ENCODE measurements at regions of chr6 and their contacts with region 1.

Region 1: GRCh38 chr6:30787954-30788353 is 43.6 kb upstream of the IER3 start:
- DNase-seq: peak; percentile 89
- ATAC-seq: peak; percentile 73
- H3K4me3 Mint-ChIP-seq: peak overlapping the region; percentile 77
- H3K27ac Mint-ChIP-seq: peak overlapping the region; percentile 94
- H3K4me1 Mint-ChIP-seq: peaks cover 70% of the 10 kb centered on the region
- H3K27me3 Mint-ChIP-seq: no peaks in the 10 kb centered on the region
- CTCF ChIP-seq: no peak

Region 2: GRCh38 chr6:30556066-30556905 is 231.7 kb before region 1 on chr6 and contains the start of gene GNL1:
- CTCF ChIA-PET with region 1: no interaction called
- POLR2A ChIA-PET with region 1: no interaction called
- intact Hi-C with region 1: no loop called
- DNase-seq: peak; percentile 100
- ATAC-seq: peak; percentile 93
- H3K4me3 Mint-ChIP-seq: peak within 1 kb of the TSS; percentile 91
- H3K27ac Mint-ChIP-seq: peak within 1 kb of the TSS; percentile 99
- H3K4me1 Mint-ChIP-seq: peaks cover 35% of the 10 kb centered on the region
- H3K27me3 Mint-ChIP-seq: no peaks in the 10 kb centered on the region
- CTCF ChIP-seq: no peak
- total RNA-seq, gene GNL1: 107 to 122 TPM

Region 3: GRCh38 chr6:30742316-30743098 is 45.4 kb before region 1 on chr6 and contains the start of gene FLOT1:
- CTCF ChIA-PET with region 1: interaction called, 5 read pairs
- POLR2A ChIA-PET with region 1: interaction called, 42 read pairs
- intact Hi-C with region 1: loop called (anchors 5 kb)
- DNase-seq: peak; percentile 99
- ATAC-seq: peak; percentile 77
- H3K4me3 Mint-ChIP-seq: peak within 1 kb of the TSS; percentile 99
- H3K27ac Mint-ChIP-seq: peak within 1 kb of the TSS; percentile 94
- H3K4me1 Mint-ChIP-seq: peaks cover 67% of the 10 kb centered on the region
- H3K27me3 Mint-ChIP-seq: no peaks in the 10 kb centered on the region
- CTCF ChIP-seq: no peak
- total RNA-seq, gene FLOT1: 135 TPM

Region 4: GRCh38 chr6:30769088-30769852 is 18.7 kb before region 1 on chr6:
- CTCF ChIA-PET with region 1: interaction called, 6 read pairs
- POLR2A ChIA-PET with region 1: interaction called, 162 read pairs
- intact Hi-C with region 1: loop called (anchors 1 kb)
- DNase-seq: peak; percentile 97
- ATAC-seq: peak; percentile 70
- H3K4me3 Mint-ChIP-seq: peak overlapping the region; percentile 75
- H3K27ac Mint-ChIP-seq: peak overlapping the region; percentile 99
- H3K4me1 Mint-ChIP-seq: peaks cover 82% of the 10 kb centered on the region
- H3K27me3 Mint-ChIP-seq: no peaks in the 10 kb centered on the region
- CTCF ChIP-seq: no peak

Region 5: DNA sequence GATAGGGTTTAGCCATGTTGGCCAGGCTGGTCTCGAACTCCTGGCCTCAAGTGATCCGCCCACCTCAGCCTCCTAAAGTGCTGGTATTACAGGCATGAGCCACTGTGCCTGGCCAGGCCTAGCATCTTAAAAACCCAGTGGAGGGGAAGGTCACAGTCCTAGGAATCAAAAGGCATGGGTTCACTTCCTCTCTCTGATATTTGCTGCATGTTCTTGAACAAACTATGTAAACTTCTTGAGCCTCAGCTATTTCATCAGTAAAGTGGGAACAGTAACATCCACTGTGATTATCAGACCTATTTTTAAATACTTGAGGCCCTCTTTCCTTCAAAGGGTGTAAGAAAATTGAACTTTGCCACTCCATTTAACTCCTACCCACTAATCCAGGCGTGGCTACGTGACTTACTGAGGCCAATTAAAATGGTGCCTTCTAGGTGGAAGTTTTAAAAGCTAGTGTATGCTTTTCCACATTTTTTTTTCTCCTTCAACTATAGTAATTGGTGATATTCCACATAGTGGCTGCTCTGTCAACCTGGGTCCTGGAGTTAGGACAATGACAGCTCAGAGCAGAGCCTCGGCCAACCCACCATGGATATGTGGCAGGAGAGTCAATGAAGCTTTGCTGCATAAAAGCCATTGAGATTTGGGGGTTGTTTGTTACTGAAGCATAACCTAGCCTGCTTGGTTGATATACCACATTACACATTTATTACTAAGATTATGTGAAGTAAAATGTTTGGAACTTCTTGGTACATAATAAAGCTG is 11.4 kb before region 1 on chr6:
- CTCF ChIA-PET with region 1: interaction called, 3 read pairs
- POLR2A ChIA-PET with region 1: interaction called, 162 read pairs
- intact Hi-C with region 1: no loop called
- DNase-seq: no peak
- ATAC-seq: no peak
- H3K4me3 Mint-ChIP-seq: no peak overlapping the region
- H3K27ac Mint-ChIP-seq: peak overlapping the region; percentile 49
- H3K4me1 Mint-ChIP-seq: peaks cover 67% of the 10 kb centered on the region
- H3K27me3 Mint-ChIP-seq: no peaks in the 10 kb centered on the region
- CTCF ChIP-seq: no peak

Region 6: GRCh38 chr6:30799210-30799609 is 11.3 kb after region 1 on chr6:
- CTCF ChIA-PET with region 1: no interaction called
- POLR2A ChIA-PET with region 1: interaction called, 11 read pairs
- intact Hi-C with region 1: no loop called
- DNase-seq: no peak
- ATAC-seq: no peak
- H3K4me3 Mint-ChIP-seq: no peak overlapping the region
- H3K27ac Mint-ChIP-seq: no peak overlapping the region
- H3K4me1 Mint-ChIP-seq: peaks cover 40% of the 10 kb centered on the region
- H3K27me3 Mint-ChIP-seq: no peaks in the 10 kb centered on the region
- CTCF ChIP-seq: no peak

Region 7: GRCh38 chr6:30814136-30815040 is 26.4 kb after region 1 on chr6:
- CTCF ChIA-PET with region 1: interaction called, 4 read pairs
- POLR2A ChIA-PET with region 1: interaction called, 67 read pairs
- intact Hi-C with region 1: loop called (anchors 1 kb)
- DNase-seq: peak; percentile 82
- ATAC-seq: peak; percentile 29
- H3K4me3 Mint-ChIP-seq: peak overlapping the region; percentile 41
- H3K27ac Mint-ChIP-seq: peak overlapping the region; percentile 98
- H3K4me1 Mint-ChIP-seq: peaks cover 83% of the 10 kb centered on the region
- H3K27me3 Mint-ChIP-seq: no peaks in the 10 kb centered on the region
- CTCF ChIP-seq: no peak

Region 8: GRCh38 chr6:30821862-30822782 is 34.2 kb after region 1 on chr6:
- CTCF ChIA-PET with region 1: interaction called, 14 read pairs
- POLR2A ChIA-PET with region 1: interaction called, 6 read pairs
- intact Hi-C with region 1: no loop called
- DNase-seq: no peak
- ATAC-seq: no peak
- H3K4me3 Mint-ChIP-seq: no peak overlapping the region
- H3K27ac Mint-ChIP-seq: peak overlapping the region; percentile 82
- H3K4me1 Mint-ChIP-seq: peaks cover 79% of the 10 kb centered on the region
- H3K27me3 Mint-ChIP-seq: no peaks in the 10 kb centered on the region
- CTCF ChIP-seq: peak; percentile 74

Measured in activated CD8-positive, alpha-beta T cell treated with anti-CD3 and anti-CD28 coated beads for 36 hours (primary cell).